GM12878 (cell line): ENCODE measurements at regions of chr9 and their contacts with region 1.

Region 1: GRCh38 chr9:37187713-37188439 is 67.5 kb downstream of the ZCCHC7 start:
- DNase-seq: peak; percentile 75
- ATAC-seq: peak; percentile 81
- H3K4me3 ChIP-seq: peak overlapping the region; percentile 61
- H3K27ac ChIP-seq: peak overlapping the region; percentile 83
- H3K4me1 ChIP-seq: peaks cover 47% of the 10 kb centered on the region
- H3K27me3 ChIP-seq: no peaks in the 10 kb centered on the region
- CTCF ChIP-seq: no peak
- EP300 ChIP-seq: peak; percentile 31 to 66; a peak in 2 of 4 replicates
- POLR2A ChIP-seq: no peak
- RAD21 ChIP-seq: no peak

Region 2: GRCh38 chr9:37004424-37004935 is 183.4 kb before region 1 on chr9:
- CTCF ChIA-PET with region 1: interaction called, 6 read pairs
- POLR2A ChIA-PET with region 1: interaction called, 7 read pairs
- RAD21 ChIA-PET with region 1: interaction called, 57 read pairs
- SMC1A ChIA-PET with region 1: interaction called, 8 read pairs
- in situ Hi-C with region 1: no loop called
- intact Hi-C with region 1: loop called (anchors 5 kb)
- DNase-seq: no peak
- ATAC-seq: peak; percentile 47
- H3K4me3 ChIP-seq: peak overlapping the region; percentile 27; the same call in 1 of the 2 replicates
- H3K27ac ChIP-seq: peak overlapping the region; percentile 98
- H3K4me1 ChIP-seq: peaks cover 92% of the 10 kb centered on the region
- H3K27me3 ChIP-seq: no peaks in the 10 kb centered on the region
- CTCF ChIP-seq: no peak
- EP300 ChIP-seq: no peak
- POLR2A ChIP-seq: peak; percentile 38
- RAD21 ChIP-seq: no peak

Region 3: GRCh38 chr9:37036776-37037502 is 150.9 kb before region 1 on chr9:
- CTCF ChIA-PET with region 1: interaction called, 5 read pairs
- POLR2A ChIA-PET with region 1: interaction called, 5 read pairs
- RAD21 ChIA-PET with region 1: interaction called, 7 read pairs
- SMC1A ChIA-PET with region 1: interaction called, 5 read pairs
- in situ Hi-C with region 1: no loop called
- intact Hi-C with region 1: loop called (anchors 2 kb)
- DNase-seq: no peak
- ATAC-seq: peak; percentile 52
- H3K4me3 ChIP-seq: peak overlapping the region; percentile 96
- H3K27ac ChIP-seq: peak overlapping the region; percentile 92
- H3K4me1 ChIP-seq: peaks cover 8% of the 10 kb centered on the region
- H3K27me3 ChIP-seq: no peaks in the 10 kb centered on the region
- CTCF ChIP-seq: 0 out of 6 replicates have a peak, but pooled peaks of 1 of the 3 experiments have one; percentile 2
- EP300 ChIP-seq: no peak
- POLR2A ChIP-seq: 0 out of 2 replicates have a peak, but pooled peaks have one; percentile 2
- RAD21 ChIP-seq: no peak

Region 4: GRCh38 chr9:37119907-37120842 is 67.7 kb before region 1 on chr9 and contains the start of gene ZCCHC7:
- CTCF ChIA-PET with region 1: interaction called, 3 read pairs
- POLR2A ChIA-PET with region 1: interaction called, 7 read pairs
- RAD21 ChIA-PET with region 1: interaction called, 16 read pairs
- SMC1A ChIA-PET with region 1: interaction called, 15 read pairs
- in situ Hi-C with region 1: no loop called
- intact Hi-C with region 1: loop called (anchors 2 kb)
- DNase-seq: peak; percentile 89
- ATAC-seq: peak; percentile 94
- H3K4me3 ChIP-seq: peak within 1 kb of the TSS; percentile 93
- H3K27ac ChIP-seq: peak within 1 kb of the TSS; percentile 93
- H3K4me1 ChIP-seq: peaks cover 8% of the 10 kb centered on the region
- H3K27me3 ChIP-seq: no peaks in the 10 kb centered on the region
- CTCF ChIP-seq: no peak
- EP300 ChIP-seq: no peak
- POLR2A ChIP-seq: peak; percentile 92
- RAD21 ChIP-seq: no peak
- polyA plus RNA-seq, gene ZCCHC7: 58.6 to 60.8 TPM

Region 5: DNA sequence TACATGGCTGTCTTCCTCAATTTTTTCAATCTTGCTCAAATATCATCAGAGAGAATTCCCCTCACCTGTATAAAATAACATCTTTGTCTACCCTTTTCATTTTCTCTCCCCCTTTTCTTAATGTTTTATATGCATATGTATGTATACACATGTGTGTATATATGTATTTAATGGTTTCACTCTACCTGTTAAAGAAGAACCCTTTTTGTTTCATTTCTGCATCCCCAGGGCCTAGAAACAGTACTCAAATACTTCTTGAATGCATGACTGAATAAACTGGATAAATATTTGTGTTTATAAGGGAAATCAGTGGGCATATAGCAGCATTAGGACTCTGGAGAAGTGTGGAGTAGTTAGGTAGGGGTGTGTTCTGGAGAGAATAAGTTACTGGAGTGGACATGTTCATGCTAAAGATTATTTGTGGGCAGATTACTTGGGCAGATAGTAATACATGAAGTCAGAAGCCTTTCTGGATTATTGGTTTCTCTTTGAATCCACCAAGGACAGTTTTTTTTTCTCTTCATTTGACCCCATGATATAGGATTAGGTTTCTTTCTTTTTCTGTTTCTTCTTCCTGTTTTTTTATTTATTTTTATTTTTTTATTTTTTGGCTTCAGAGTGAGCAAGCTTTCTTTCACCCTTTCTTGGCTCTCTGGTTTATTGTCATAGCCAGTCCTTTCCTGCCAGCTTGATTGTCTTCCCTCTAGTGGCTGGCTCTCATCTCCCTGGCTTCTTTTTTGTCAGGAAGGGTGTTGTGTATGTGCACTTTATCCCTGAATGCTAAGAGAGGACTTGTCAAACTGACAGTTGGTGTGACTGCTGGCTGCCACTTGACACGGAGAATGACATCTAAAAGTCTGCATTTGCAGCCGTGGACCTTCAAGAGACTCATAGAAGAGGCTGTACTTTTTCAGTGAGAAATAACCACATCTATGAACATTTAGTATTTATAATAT is 21.8 kb after region 1 on chr9:
- CTCF ChIA-PET with region 1: interaction called, 8 read pairs
- POLR2A ChIA-PET with region 1: interaction called, 18 read pairs
- RAD21 ChIA-PET with region 1: interaction called, 27 read pairs
- SMC1A ChIA-PET with region 1: interaction called, 46 read pairs
- in situ Hi-C with region 1: no loop called
- intact Hi-C with region 1: no loop called
- DNase-seq: no peak
- ATAC-seq: peak; percentile 51
- H3K4me3 ChIP-seq: no peak overlapping the region
- H3K27ac ChIP-seq: peak overlapping the region; percentile 73
- H3K4me1 ChIP-seq: peaks cover 31% of the 10 kb centered on the region
- H3K27me3 ChIP-seq: no peaks in the 10 kb centered on the region
- CTCF ChIP-seq: peak in 2 of 3 experiments; percentile 16 to 21; a peak in 3 of 6 replicates
- EP300 ChIP-seq: no peak
- POLR2A ChIP-seq: no peak
- RAD21 ChIP-seq: peak; percentile 22; the same call in 1 of the 2 replicates

Region 6: DNA sequence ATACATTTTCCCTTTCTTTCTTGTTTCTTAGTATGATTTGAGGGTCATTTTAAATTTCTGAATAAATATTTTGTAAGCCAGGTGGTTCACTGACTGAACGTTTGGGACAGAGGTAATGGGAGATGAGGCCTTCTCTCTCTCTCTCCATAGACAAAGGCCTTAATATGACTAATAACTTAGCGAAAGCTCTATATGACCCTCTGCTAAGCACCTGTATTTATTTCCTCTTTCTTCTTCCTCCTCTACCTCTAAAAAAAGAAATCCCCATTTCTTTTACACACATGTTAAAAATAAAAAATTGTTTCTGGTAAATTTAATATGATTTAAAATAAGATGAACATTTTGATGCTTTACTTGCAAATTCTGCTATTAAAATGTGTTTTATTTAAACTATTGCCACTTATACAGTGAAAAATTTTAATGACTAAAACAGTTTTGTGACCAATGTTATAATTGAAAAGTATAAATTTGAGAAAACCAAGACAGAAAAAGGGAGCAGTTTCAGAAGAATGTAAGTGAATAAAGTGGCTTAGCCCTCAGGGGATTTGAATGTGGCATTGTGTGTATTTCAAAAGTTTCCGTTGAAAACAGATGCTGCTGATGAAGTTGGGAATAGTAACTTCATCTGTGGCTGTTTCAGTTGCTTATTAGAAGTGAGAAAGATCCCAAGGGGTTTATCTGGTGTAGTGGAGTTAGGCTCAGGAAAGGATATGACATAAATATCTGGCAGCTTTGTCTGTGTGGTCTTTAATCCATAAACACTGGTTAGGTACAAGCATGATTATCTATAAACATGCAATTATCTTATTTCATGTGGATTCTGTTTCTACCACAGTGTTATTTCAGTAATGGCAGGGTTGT is 106.0 kb after region 1 on chr9:
- CTCF ChIA-PET with region 1: interaction called, 5 read pairs
- POLR2A ChIA-PET with region 1: interaction called, 3 read pairs
- RAD21 ChIA-PET with region 1: interaction called, 8 read pairs
- SMC1A ChIA-PET with region 1: interaction called, 40 read pairs
- in situ Hi-C with region 1: no loop called
- intact Hi-C with region 1: loop called (anchors 5 kb)
- DNase-seq: peak; percentile 91
- ATAC-seq: peak; percentile 73
- H3K4me3 ChIP-seq: no peak overlapping the region
- H3K27ac ChIP-seq: peak overlapping the region; percentile 90
- H3K4me1 ChIP-seq: peaks cover 60% of the 10 kb centered on the region
- H3K27me3 ChIP-seq: no peaks in the 10 kb centered on the region
- CTCF ChIP-seq: no peak
- EP300 ChIP-seq: peak; percentile 95 to 96
- POLR2A ChIP-seq: no peak
- RAD21 ChIP-seq: no peak

Region 7: DNA sequence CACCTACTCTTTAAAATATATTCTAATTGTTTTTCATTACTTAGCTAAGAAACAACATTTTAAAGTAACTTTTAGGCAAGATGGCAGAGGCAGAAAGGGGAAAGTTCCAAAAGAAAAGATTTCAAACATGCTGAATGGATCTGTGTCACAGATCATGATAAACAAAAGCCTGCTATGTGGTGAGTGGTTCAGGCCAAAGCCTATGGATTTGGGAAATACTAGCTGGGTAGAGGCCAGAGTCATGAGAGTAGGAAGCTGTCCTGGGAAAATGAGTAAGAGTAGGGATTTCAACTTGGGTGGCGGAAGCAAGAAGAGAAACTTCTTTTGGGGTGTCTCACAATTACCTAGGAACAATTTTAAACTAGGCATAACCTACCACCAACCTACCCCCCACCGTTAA is 165.9 kb after region 1 on chr9:
- CTCF ChIA-PET with region 1: no interaction called
- POLR2A ChIA-PET with region 1: no interaction called
- RAD21 ChIA-PET with region 1: no interaction called
- SMC1A ChIA-PET with region 1: no interaction called
- in situ Hi-C with region 1: no loop called
- intact Hi-C with region 1: no loop called
- DNase-seq: no peak
- ATAC-seq: no peak
- H3K4me3 ChIP-seq: no peak overlapping the region
- H3K27ac ChIP-seq: no peak overlapping the region
- H3K4me1 ChIP-seq: no peaks in the 10 kb centered on the region
- H3K27me3 ChIP-seq: no peaks in the 10 kb centered on the region
- CTCF ChIP-seq: no peak
- EP300 ChIP-seq: no peak
- POLR2A ChIP-seq: no peak
- RAD21 ChIP-seq: no peak

Region 8: DNA sequence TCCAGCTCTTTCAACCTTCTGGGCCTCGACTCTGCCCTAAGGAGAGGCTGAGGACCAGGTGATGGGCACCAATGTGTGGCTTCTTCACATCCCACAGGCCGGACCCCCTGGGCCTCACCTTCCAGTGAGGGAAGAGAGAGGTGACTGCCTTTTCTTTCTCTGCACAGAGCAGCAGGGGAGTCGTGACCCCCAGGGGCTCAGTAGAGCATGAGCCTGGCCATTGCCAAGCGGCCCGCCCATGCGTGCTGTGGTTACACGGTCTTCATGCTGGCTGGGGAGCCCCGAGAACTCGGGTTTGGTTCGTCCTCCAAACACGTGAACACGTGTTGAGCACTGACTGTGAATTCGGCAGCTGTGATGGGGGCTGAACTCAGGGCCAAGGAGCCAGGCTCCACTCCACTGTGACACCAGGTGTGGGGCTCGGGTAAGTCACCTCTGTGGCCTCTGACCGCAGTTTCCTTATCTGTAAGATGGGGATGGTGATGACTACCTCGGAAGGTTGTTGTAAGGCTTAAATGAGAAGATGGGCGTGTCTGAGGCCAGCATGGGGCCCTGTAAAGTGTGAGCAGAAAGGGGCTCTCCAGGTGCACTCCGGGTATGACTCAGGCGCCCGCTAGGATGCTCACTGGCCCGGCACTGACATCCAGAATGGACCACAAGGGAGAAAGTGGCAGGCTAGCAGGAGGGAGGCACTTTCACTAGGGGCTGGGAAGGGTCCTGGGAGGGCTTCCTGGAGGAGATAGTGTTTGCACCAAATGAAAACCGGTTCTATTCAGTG is 221.2 kb after region 1 on chr9:
- CTCF ChIA-PET with region 1: interaction called, 7 read pairs
- POLR2A ChIA-PET with region 1: interaction called, 4 read pairs
- RAD21 ChIA-PET with region 1: interaction called, 4 read pairs
- SMC1A ChIA-PET with region 1: interaction called, 3 read pairs
- in situ Hi-C with region 1: no loop called
- intact Hi-C with region 1: loop called (anchors 5 kb)
- DNase-seq: peak; percentile 100
- ATAC-seq: peak; percentile 76
- H3K4me3 ChIP-seq: peak overlapping the region; percentile 57; the same call in 1 of the 2 replicates
- H3K27ac ChIP-seq: peak overlapping the region; percentile 100
- H3K4me1 ChIP-seq: peaks cover 66% of the 10 kb centered on the region
- H3K27me3 ChIP-seq: no peaks in the 10 kb centered on the region
- CTCF ChIP-seq: peak in 2 of 3 experiments; percentile 11 to 16; a peak in 1 of 6 replicates
- EP300 ChIP-seq: peak; percentile 98 to 99
- POLR2A ChIP-seq: peak; percentile 85
- RAD21 ChIP-seq: no peak